Activated CD4-positive, alpha-beta T cell treated with anti-CD3 and anti-CD28 coated beads for 36 hours (primary cell): ENCODE measurements at regions of chr1 and their contacts with region 1.

Region 1: GRCh38 chr1:156659994-156660751 is 17.0 kb downstream of the NES start:
- DNase-seq: peak; percentile 98
- ATAC-seq: peak; percentile 88
- H3K4me3 Mint-ChIP-seq: peak overlapping the region; percentile 80
- H3K27ac Mint-ChIP-seq: peak overlapping the region; percentile 74
- H3K4me1 Mint-ChIP-seq: peaks cover 48% of the 10 kb centered on the region
- H3K27me3 Mint-ChIP-seq: peaks cover 27% of the 10 kb centered on the region

Region 2: GRCh38 chr1:156540791-156541383 is 119.3 kb before region 1 on chr1:
- CTCF ChIA-PET with region 1: no interaction called
- POLR2A ChIA-PET with region 1: no interaction called
- intact Hi-C with region 1: no loop called
- DNase-seq: no peak
- ATAC-seq: no peak
- H3K4me3 Mint-ChIP-seq: no peak overlapping the region
- H3K27ac Mint-ChIP-seq: no peak overlapping the region
- H3K4me1 Mint-ChIP-seq: no peaks in the 10 kb centered on the region
- H3K27me3 Mint-ChIP-seq: no peaks in the 10 kb centered on the region

Region 3: GRCh38 chr1:156625436-156626078 is 34.6 kb before region 1 on chr1:
- CTCF ChIA-PET with region 1: interaction called, 117 read pairs
- POLR2A ChIA-PET with region 1: interaction called, 3 read pairs
- intact Hi-C with region 1: loop called (anchors 1 kb)
- DNase-seq: peak; percentile 83
- ATAC-seq: peak; percentile 65
- H3K4me3 Mint-ChIP-seq: peak overlapping the region; percentile 53
- H3K27ac Mint-ChIP-seq: no peak overlapping the region
- H3K4me1 Mint-ChIP-seq: peaks cover 6% of the 10 kb centered on the region
- H3K27me3 Mint-ChIP-seq: peaks cover 41% of the 10 kb centered on the region

Region 4: DNA sequence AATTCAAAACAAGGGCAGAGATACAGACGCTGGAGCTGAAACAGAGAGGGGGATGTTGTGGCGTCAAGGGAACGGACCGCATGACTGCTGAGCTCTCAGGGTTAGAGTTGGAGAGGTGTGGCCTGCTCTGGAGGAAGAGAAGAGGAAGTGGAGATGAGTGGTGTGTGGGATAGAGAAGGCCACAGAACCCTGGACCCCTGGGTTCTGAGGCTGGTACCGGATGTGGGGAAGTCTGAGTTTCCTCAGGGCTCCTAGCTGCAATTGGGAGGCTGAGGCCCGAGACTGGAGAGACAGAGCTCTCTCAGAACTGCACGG is 16.4 kb before region 1 on chr1:
- CTCF ChIA-PET with region 1: interaction called, 14 read pairs
- POLR2A ChIA-PET with region 1: no interaction called
- intact Hi-C with region 1: no loop called
- DNase-seq: peak; percentile 56
- ATAC-seq: peak; percentile 81
- H3K4me3 Mint-ChIP-seq: no peak overlapping the region
- H3K27ac Mint-ChIP-seq: no peak overlapping the region
- H3K4me1 Mint-ChIP-seq: peaks cover 22% of the 10 kb centered on the region
- H3K27me3 Mint-ChIP-seq: peaks cover 79% of the 10 kb centered on the region

Region 5: DNA sequence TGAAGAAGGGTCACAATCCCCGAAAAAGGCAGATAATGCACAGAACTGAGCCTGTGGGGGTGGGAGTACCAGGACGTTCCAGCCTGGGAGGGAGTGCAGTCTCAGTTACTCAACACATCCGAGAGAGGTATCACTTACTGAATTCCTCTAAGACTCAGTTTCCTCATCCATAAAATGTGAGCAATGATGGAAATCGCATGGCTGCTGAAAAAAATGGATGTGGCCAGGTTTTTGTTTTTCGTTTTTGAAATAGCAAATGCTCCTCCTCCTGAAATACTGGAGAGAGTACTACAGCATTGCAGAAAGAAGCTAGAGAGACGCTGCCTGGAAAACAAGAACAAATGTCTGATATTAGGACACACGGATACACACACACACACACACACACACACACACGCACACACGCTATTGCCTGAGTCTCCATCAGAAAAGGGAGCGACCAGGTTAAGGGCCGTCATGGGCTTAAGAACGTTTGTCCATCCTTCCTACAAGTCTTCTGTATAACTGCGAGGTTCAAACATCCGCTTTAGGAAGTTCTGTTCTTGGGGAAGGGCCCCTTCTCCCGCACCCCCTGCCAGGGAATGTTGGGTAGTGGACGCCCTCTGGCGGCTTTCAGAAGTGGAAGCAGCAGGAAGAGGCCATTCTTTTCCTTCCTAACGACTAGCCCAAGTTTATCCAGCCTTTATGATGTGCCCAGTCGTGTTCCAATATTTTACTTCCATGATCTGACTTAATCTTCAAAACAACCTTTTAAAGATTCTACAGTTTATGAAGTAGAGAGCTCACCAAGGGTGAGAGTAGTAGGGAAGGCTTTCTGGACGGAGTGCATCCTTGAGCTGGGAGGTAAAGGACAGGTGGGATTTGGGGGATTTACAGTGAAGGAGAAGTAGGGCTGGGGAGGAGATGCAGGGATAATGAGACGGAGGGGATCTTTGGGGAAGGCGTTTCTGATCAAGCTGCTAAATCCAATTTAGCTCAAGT is 17.7 kb after region 1 on chr1:
- CTCF ChIA-PET with region 1: interaction called, 28 read pairs
- POLR2A ChIA-PET with region 1: no interaction called
- intact Hi-C with region 1: loop called (anchors 1 kb)
- DNase-seq: peak; percentile 53
- ATAC-seq: peak; percentile 44
- H3K4me3 Mint-ChIP-seq: no peak overlapping the region
- H3K27ac Mint-ChIP-seq: no peak overlapping the region
- H3K4me1 Mint-ChIP-seq: peaks cover 11% of the 10 kb centered on the region
- H3K27me3 Mint-ChIP-seq: peaks cover 43% of the 10 kb centered on the region

Region 6: DNA sequence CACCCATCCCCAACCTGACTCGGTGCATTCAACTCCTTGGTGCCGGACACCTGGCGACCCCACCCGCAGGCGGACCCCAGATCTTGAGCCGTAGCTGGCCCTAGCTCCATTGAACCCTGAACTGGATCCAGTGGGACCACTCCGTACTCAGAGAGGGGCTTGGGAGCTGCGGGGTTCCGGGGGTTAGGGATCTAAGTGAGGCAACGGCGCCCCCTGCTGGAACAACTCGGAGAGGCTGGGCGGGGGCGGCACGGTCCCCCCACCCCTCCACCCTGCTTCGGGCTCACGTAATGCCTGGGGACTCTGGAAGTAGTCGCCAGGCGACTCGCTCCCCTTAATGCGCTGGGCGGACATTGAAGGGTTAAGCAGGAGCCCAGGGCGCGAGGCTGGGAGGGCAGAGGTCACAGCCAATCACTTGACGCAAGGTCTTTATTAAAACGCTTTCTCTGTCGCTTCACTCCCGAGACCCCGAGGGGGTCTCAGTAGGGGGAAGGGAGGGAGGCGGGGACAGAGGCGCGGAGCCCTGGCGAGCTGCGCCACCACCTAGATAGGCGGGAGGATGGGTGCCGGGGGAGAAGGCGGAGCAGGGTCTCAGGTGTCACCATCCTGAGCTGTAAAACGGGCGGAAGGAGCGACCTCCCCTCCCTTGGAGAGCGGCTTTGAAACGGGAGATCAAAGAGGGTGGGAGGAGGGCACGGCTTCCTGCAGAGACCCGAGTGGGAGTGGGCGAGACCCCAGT is 45.9 kb after region 1 on chr1:
- CTCF ChIA-PET with region 1: interaction called, 9 read pairs
- POLR2A ChIA-PET with region 1: no interaction called
- intact Hi-C with region 1: loop called (anchors 1 kb)
- DNase-seq: peak; percentile 88
- ATAC-seq: peak; percentile 80
- H3K4me3 Mint-ChIP-seq: peak overlapping the region; percentile 71
- H3K27ac Mint-ChIP-seq: peak overlapping the region; percentile 58
- H3K4me1 Mint-ChIP-seq: peaks cover 24% of the 10 kb centered on the region
- H3K27me3 Mint-ChIP-seq: peaks cover 20% of the 10 kb centered on the region

Region 7: GRCh38 chr1:156767101-156767878 is 107.1 kb after region 1 on chr1 and contains the start of gene PRCC:
- CTCF ChIA-PET with region 1: interaction called, 5 read pairs
- POLR2A ChIA-PET with region 1: no interaction called
- intact Hi-C with region 1: loop called in 1 of 2 experiments (anchors 1 kb)
- DNase-seq: peak; percentile 98
- ATAC-seq: peak; percentile 96
- H3K4me3 Mint-ChIP-seq: no peak within 1 kb of the TSS
- H3K27ac Mint-ChIP-seq: no peak within 1 kb of the TSS
- H3K4me1 Mint-ChIP-seq: peaks cover 35% of the 10 kb centered on the region
- H3K27me3 Mint-ChIP-seq: no peaks in the 10 kb centered on the region
- total RNA-seq, gene PRCC: 80.4 to 110 TPM

Region 8: DNA sequence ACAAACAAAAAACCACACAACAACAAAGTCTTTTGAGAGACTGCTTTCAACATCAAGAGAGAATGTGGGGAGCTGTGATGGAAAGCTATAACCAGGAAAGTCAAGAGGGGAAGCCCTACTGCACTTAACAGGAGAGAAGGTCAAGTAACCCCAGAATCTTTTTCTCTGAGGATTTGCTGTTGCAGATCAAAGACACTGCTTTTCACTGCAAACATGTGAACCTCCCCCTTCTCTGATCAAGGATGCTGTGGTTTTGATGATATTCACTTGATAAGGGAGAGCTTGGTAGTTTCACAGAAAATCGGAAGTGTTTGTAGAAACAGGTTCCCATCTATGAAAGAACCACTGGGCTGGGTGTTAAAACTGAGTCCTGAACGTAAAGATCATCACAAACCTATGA is 473.3 kb after region 1 on chr1:
- CTCF ChIA-PET with region 1: no interaction called
- POLR2A ChIA-PET with region 1: no interaction called
- intact Hi-C with region 1: loop called in 1 of 2 experiments (anchors 5 kb)
- DNase-seq: no peak
- ATAC-seq: peak; percentile 31
- H3K4me3 Mint-ChIP-seq: peak overlapping the region; percentile 4
- H3K27ac Mint-ChIP-seq: peak overlapping the region; percentile 66
- H3K4me1 Mint-ChIP-seq: peaks cover 64% of the 10 kb centered on the region
- H3K27me3 Mint-ChIP-seq: no peaks in the 10 kb centered on the region

Region 9: DNA sequence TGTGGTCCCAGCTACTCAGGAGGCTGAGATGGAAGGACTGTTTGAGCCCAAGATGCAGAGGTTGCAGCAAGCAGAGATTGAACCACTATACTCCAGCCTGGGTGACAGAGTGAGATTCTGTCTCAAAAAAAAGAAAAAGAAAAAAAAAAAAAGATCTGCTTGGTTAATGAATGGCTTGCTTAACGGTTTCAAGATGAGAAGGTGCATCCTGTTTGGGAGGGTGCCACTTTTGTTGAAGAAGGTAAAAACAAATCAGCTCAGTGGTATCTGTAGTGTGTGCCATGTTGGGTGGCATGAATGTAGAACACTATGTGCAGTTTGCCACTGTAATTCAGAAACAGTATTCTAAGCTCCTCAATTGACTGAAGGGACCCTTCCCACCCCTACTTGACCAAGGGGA is 573.0 kb after region 1 on chr1:
- CTCF ChIA-PET with region 1: no interaction called
- POLR2A ChIA-PET with region 1: no interaction called
- intact Hi-C with region 1: no loop called
- DNase-seq: no peak
- ATAC-seq: peak; percentile 19
- H3K4me3 Mint-ChIP-seq: no peak overlapping the region
- H3K27ac Mint-ChIP-seq: no peak overlapping the region
- H3K4me1 Mint-ChIP-seq: no peaks in the 10 kb centered on the region
- H3K27me3 Mint-ChIP-seq: peaks cover 14% of the 10 kb centered on the region